IMR-90 (cell line): ENCODE measurements at regions of chr3 and their contacts with region 1.

Region 1: DNA sequence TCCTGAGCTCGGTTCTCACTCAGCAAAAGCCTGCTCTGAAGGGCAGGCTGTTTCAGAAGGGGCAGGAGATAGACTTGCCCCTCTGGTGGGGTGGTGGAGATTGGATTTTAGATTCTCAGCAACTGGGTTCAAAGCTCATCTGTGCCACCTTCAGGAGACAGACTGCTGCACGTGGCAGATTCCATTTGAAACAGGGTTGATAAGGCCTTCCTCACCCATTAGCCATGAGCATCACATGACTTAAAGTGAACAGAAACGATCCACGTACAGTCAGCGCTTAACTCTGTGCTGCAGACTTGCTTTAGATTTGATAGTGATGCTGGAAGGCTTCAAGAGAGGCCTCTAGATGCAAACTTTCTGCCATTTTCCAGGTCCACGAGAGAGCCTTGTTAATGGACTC is 35.0 kb upstream of the MGLL start:
- DNase-seq: peak; percentile 11
- ATAC-seq: no peak
- H3K4me3 ChIP-seq: no peak overlapping the region
- H3K27ac ChIP-seq: no peak overlapping the region
- H3K4me1 ChIP-seq: no peaks in the 10 kb centered on the region
- H3K27me3 ChIP-seq: peaks cover 32% of the 10 kb centered on the region
- CTCF ChIP-seq: no peak; the same call in 1 of the 2 replicates
- POLR2A ChIP-seq: no peak
- RAD21 ChIP-seq: no peak

Region 2: GRCh38 chr3:127114337-127115070 is 742.8 kb before region 1 on chr3:
- CTCF ChIA-PET with region 1: no interaction called
- POLR2A ChIA-PET with region 1: no interaction called
- dilution Hi-C with region 1: no loop called
- in situ Hi-C with region 1: no loop called
- intact Hi-C with region 1: no loop called
- DNase-seq: no peak
- ATAC-seq: no peak
- H3K4me3 ChIP-seq: no peak overlapping the region
- H3K27ac ChIP-seq: no peak overlapping the region
- H3K4me1 ChIP-seq: no peaks in the 10 kb centered on the region
- H3K27me3 ChIP-seq: no peaks in the 10 kb centered on the region; the same call in 1 of the 2 replicates
- CTCF ChIP-seq: no peak
- POLR2A ChIP-seq: no peak
- RAD21 ChIP-seq: no peak

Region 3: GRCh38 chr3:127953091-127954035 is 96.0 kb after region 1 on chr3:
- CTCF ChIA-PET with region 1: no interaction called
- POLR2A ChIA-PET with region 1: no interaction called
- dilution Hi-C with region 1: no loop called
- in situ Hi-C with region 1: no loop called
- intact Hi-C with region 1: loop called (anchors 5 kb)
- DNase-seq: peak; percentile 29
- ATAC-seq: no peak; the same call in 1 of the 2 replicates
- H3K4me3 ChIP-seq: no peak overlapping the region
- H3K27ac ChIP-seq: no peak overlapping the region
- H3K4me1 ChIP-seq: 0 out of 2 replicates have a peak, but pooled peaks cover 3% of the 10 kb centered on the region
- H3K27me3 ChIP-seq: peaks cover 13% of the 10 kb centered on the region
- CTCF ChIP-seq: no peak
- POLR2A ChIP-seq: no peak
- RAD21 ChIP-seq: no peak

Region 4: DNA sequence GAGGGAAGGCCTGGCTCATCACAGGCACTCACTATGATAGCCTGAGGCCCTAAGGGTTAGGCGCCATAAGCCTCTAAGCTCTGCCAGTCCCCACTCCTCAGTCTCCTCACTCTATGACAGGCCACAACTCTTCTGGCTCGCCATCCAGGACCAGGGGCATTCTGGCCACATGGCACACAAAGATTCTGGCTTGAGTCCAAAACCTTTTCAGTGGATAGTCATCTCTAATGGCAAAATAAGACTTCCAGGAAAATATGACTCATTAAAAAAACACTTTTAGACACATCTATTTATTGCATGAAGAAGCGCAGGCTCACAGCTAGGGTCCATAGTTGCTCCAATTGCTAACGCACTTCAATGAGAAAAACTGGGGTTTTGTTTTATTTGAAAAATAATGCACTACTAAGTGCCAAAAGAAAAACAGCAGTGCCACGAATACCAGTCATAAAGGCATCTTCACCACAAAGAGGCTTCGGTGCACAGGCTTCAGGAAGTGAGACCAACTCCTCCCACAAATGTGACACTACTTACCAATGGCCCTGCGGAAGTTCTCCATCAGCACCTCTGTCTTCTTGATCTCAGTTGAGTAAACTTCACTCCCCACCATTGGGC is 255.1 kb after region 1 on chr3:
- CTCF ChIA-PET with region 1: no interaction called
- POLR2A ChIA-PET with region 1: no interaction called
- dilution Hi-C with region 1: no loop called
- in situ Hi-C with region 1: no loop called
- intact Hi-C with region 1: no loop called
- DNase-seq: peak; percentile 90
- ATAC-seq: peak; percentile 80
- H3K4me3 ChIP-seq: no peak overlapping the region
- H3K27ac ChIP-seq: peak overlapping the region; percentile 54; the same call in 1 of the 2 replicates
- H3K4me1 ChIP-seq: peaks cover 14% of the 10 kb centered on the region
- H3K27me3 ChIP-seq: no peaks in the 10 kb centered on the region
- CTCF ChIP-seq: peak; percentile 11; the same call in 1 of the 2 replicates
- POLR2A ChIP-seq: no peak
- RAD21 ChIP-seq: no peak